ENCODE measurements at regions of chr17 and their contacts with region 1.

Region 1: GRCh38 chr17:78250891-78251794 is 19.7 kb downstream of the TMEM235 start:
- DNase-seq: peak; percentile 90
- ATAC-seq: peak; percentile 81
- H3K4me3 Mint-ChIP-seq: no peak overlapping the region
- H3K27ac Mint-ChIP-seq: no peak overlapping the region
- H3K4me1 Mint-ChIP-seq: peaks cover 33% of the 10 kb centered on the region
- H3K27me3 Mint-ChIP-seq: peaks cover 12% of the 10 kb centered on the region

Region 2: DNA sequence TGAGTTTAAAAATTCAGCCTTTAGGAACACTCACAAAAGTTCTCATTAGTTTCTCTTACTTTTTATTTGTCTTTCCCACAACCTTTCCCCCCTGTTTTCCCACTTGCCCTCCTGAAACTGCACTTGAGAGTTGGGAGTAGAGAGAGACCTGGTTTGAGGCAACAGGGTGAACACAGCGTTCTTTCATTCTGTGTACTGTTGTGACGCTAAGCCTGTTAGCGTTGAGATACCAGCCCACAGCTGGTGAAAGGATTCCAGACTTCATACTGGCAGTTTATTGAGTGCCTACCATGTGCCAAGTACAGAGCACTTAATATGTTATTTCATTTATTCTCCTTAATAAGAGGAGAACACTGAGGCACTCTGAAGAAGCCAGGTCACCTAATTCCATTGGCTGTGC is 282.4 kb before region 1 on chr17:
- CTCF ChIA-PET with region 1: no interaction called
- DNase-seq: no peak
- ATAC-seq: no peak
- H3K4me3 Mint-ChIP-seq: no peak overlapping the region
- H3K27ac Mint-ChIP-seq: no peak overlapping the region
- H3K4me1 Mint-ChIP-seq: peaks cover 14% of the 10 kb centered on the region
- H3K27me3 Mint-ChIP-seq: no peaks in the 10 kb centered on the region

Region 3: DNA sequence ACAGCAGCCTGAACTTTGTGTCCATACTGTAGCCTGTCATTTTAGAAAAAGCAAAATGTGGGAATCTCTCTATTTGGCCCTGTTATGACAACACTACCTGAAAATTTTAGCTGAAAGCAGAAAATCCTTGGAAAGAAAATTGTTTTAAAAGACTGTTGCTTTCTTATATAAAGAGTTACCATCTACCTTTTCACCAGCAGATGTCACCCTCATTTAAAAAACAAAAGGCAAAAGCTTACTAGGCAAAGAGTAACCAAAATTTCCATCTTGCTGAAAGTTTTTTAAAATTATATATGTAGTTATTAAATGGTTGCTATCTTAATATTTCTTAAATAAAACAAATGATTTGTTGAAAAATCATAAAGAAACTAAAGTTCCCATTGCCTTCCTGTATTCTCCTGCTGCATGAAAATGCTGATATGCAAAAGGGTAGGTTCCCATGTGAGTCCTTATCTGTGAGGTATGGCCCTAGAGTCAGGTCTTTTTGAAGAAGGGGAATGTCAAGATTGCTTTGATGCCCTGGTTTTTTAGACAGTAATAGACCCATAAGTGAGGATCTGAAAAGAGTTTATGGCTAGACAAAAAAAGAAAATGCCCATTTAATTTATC is 231.7 kb before region 1 on chr17:
- CTCF ChIA-PET with region 1: interaction called, 52 read pairs
- DNase-seq: no peak
- ATAC-seq: peak; percentile 54
- H3K4me3 Mint-ChIP-seq: peak overlapping the region; percentile 63
- H3K27ac Mint-ChIP-seq: peak overlapping the region; percentile 88
- H3K4me1 Mint-ChIP-seq: peaks cover 19% of the 10 kb centered on the region
- H3K27me3 Mint-ChIP-seq: no peaks in the 10 kb centered on the region

Region 4: DNA sequence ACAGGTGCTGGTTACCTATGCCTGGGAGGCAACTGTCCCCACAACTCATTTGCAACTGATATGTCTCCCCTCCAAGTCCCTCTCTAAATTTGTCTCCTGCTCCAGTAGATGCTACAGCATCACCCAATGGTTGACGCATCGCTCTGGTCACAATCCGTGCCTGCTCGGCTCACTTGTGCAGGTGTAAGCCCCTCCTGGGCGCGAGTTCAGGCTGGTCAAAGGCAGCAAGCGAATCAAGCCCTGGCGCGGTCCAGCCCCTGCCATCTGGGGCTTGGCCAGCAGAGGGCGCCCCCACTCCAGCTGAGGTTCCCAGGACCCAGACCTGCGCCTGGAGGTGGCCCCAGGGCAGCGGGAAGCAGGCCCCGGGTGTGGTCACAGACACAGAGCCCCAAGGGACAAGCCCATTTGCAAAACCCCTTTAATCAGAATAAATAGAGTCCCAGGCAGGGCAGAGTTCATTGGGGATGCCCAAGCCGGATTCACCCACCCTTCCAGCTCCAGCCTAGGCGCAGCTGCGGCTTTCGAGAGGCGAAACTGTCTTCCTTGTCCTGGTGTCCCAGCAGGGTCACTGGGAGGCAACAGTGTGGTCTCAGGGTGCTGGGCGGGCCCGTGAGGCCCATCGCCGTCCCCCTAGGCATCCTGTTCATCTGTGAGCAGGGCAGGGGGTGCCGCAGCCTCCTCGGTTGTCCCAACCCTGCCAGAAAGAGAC is 138.5 kb before region 1 on chr17:
- CTCF ChIA-PET with region 1: interaction called, 24 read pairs
- DNase-seq: peak; percentile 83
- ATAC-seq: peak; percentile 64
- H3K4me3 Mint-ChIP-seq: no peak overlapping the region
- H3K27ac Mint-ChIP-seq: peak overlapping the region; percentile 86
- H3K4me1 Mint-ChIP-seq: peaks cover 34% of the 10 kb centered on the region
- H3K27me3 Mint-ChIP-seq: no peaks in the 10 kb centered on the region

Region 5: GRCh38 chr17:78226749-78227399 is 24.3 kb before region 1 on chr17:
- CTCF ChIA-PET with region 1: interaction called, 24 read pairs
- DNase-seq: no peak
- ATAC-seq: no peak
- H3K4me3 Mint-ChIP-seq: no peak overlapping the region
- H3K27ac Mint-ChIP-seq: no peak overlapping the region
- H3K4me1 Mint-ChIP-seq: peaks cover 5% of the 10 kb centered on the region
- H3K27me3 Mint-ChIP-seq: peaks cover 20% of the 10 kb centered on the region

Region 6: GRCh38 chr17:78360371-78361224 is 109.5 kb after region 1 on chr17:
- CTCF ChIA-PET with region 1: interaction called, 25 read pairs
- DNase-seq: peak; percentile 94
- ATAC-seq: peak; percentile 38
- H3K4me3 Mint-ChIP-seq: peak overlapping the region; percentile 77
- H3K27ac Mint-ChIP-seq: peak overlapping the region; percentile 87
- H3K4me1 Mint-ChIP-seq: peaks cover 47% of the 10 kb centered on the region
- H3K27me3 Mint-ChIP-seq: peaks cover 12% of the 10 kb centered on the region

Measured in activated CD8-positive, alpha-beta memory T cell treated with anti-CD3 and anti-CD28 coated beads, Interleukin-2, amount 10 ng/mL, durations not matched to agents 7 days and 5 days (primary cell).